Dorsolateral prefrontal cortex (tissue), 120 donors: ENCODE measurements at regions of chr15 and their contacts with region 1.

Region 1: GRCh38 chr15:27070841-27071240 is 99.9 kb downstream of the GABRG3 start:
- DNase-seq: no peak
- H3K4me3 ChIP-seq: no peak overlapping the region
- H3K27ac ChIP-seq: no peak overlapping the region
- H3K27me3 ChIP-seq: no peaks in the 10 kb centered on the region
- CTCF ChIP-seq: no peak

Region 2: GRCh38 chr15:27133249-27133648 is 62.4 kb after region 1 on chr15:
- intact Hi-C with region 1: no loop called
- DNase-seq: no peak
- H3K4me3 ChIP-seq: no peak overlapping the region
- H3K27ac ChIP-seq: no peak overlapping the region
- H3K27me3 ChIP-seq: no peaks in the 10 kb centered on the region
- CTCF ChIP-seq: no peak

Region 3: DNA sequence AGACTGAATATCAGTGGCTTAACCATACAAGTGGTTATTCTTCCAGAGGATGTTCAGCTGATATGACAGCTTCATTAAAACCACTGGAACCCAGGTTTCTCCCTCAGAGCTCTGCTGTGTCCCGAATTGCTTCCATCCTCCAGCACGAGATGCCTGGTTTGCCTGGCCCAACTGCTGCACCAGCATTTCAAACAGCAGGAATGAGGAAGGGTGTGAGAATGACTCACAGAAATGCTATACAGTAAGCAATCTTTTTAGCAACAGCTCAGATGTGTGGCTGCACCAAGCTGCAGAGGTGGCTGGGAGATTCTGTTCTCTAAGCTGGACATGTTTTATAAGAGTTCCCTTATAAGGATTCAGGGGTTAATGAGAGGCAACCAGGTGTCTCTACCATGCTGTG is 171.1 kb after region 1 on chr15:
- intact Hi-C with region 1: loop called in 1 of 2 experiments (anchors 10 kb)
- DNase-seq: peak in 8 of 10 donors; percentile 31 to 73 (median 61)
- H3K4me3 ChIP-seq: no peak overlapping the region
- H3K27ac ChIP-seq: peak overlapping the region in 1 of 59 donors; percentile 33
- H3K27me3 ChIP-seq: no peaks in the 10 kb centered on the region
- CTCF ChIP-seq: no peak